WTC11 (cell line): ENCODE measurements at regions of chr1 and their contacts with region 1.

Region 1: GRCh38 chr1:40774266-40774998 is 9.2 kb upstream of the KCNQ4 start:
- DNase-seq: peak; percentile 86
- ATAC-seq: peak; percentile 76
- H3K4me3 Mint-ChIP-seq: no peak overlapping the region
- H3K27ac Mint-ChIP-seq: peak overlapping the region; percentile 96
- H3K4me1 Mint-ChIP-seq: peaks cover 50% of the 10 kb centered on the region
- H3K27me3 Mint-ChIP-seq: peaks cover 2% of the 10 kb centered on the region; the same call in 1 of the 2 replicates
- CTCF ChIP-seq: peak; percentile 77

Region 2: GRCh38 chr1:40612345-40612831 is 162.0 kb before region 1 on chr1:
- CTCF ChIA-PET with region 1: interaction called, 10 read pairs
- POLR2A ChIA-PET with region 1: no interaction called
- DNase-seq: peak; percentile 77
- ATAC-seq: peak; percentile 98
- H3K4me3 Mint-ChIP-seq: no peak overlapping the region; the same call in 1 of the 2 replicates
- H3K27ac Mint-ChIP-seq: no peak overlapping the region
- H3K4me1 Mint-ChIP-seq: 0 out of 2 replicates have a peak, but pooled peaks cover 3% of the 10 kb centered on the region
- H3K27me3 Mint-ChIP-seq: no peaks in the 10 kb centered on the region
- CTCF ChIP-seq: peak; percentile 61

Region 3: GRCh38 chr1:40802742-40803113 is 28.3 kb after region 1 on chr1:
- CTCF ChIA-PET with region 1: interaction called, 11 read pairs
- POLR2A ChIA-PET with region 1: no interaction called
- DNase-seq: no peak
- ATAC-seq: no peak
- H3K4me3 Mint-ChIP-seq: peak overlapping the region; percentile 64
- H3K27ac Mint-ChIP-seq: peak overlapping the region; percentile 70; the same call in 1 of the 2 replicates
- H3K4me1 Mint-ChIP-seq: peaks cover 56% of the 10 kb centered on the region
- H3K27me3 Mint-ChIP-seq: peaks cover 15% of the 10 kb centered on the region
- CTCF ChIP-seq: no peak